ENCODE measurements at regions of chr7 and their contacts with region 1.

Region 1: DNA sequence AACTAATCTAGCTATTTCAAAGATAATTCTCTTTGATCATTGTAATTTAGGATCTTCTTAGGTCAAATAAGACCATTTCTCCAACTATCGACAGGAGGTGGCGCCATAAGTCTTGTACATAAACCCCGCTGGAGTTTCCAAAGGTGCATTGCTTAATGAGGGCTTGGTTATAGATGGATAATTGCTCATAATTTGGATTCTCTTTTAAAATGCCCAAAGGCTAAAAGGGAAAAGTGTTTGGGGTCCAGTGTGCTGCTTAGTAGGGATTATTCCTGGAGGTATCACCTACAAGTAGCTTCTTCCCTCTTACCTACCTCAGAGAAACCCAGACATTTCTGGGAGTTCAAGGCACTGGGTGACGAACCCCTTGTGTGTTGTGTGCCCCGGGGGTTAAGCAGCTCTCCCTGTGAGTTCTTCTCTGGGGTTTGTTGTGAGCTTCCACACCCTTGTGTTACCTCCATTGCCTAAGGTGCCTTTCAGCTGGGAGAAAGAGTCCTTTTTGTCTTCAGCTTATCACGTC is 75.2 kb downstream of the PAXIP1 start:
- H3K4me3 Mint-ChIP-seq: peak overlapping the region; percentile 98
- H3K27ac Mint-ChIP-seq: peak overlapping the region; percentile 98
- H3K4me1 Mint-ChIP-seq: peaks cover 19% of the 10 kb centered on the region
- H3K27me3 Mint-ChIP-seq: peaks cover 4% of the 10 kb centered on the region

Region 2: GRCh38 chr7:154953006-154953684 is 25.5 kb after region 1 on chr7:
- intact Hi-C with region 1: loop called (anchors 1 kb)
- H3K4me3 Mint-ChIP-seq: no peak overlapping the region
- H3K27ac Mint-ChIP-seq: no peak overlapping the region
- H3K4me1 Mint-ChIP-seq: no peaks in the 10 kb centered on the region
- H3K27me3 Mint-ChIP-seq: no peaks in the 10 kb centered on the region

Region 3: GRCh38 chr7:154968336-154969001 is 40.8 kb after region 1 on chr7:
- intact Hi-C with region 1: no loop called
- H3K4me3 Mint-ChIP-seq: no peak overlapping the region
- H3K27ac Mint-ChIP-seq: no peak overlapping the region
- H3K4me1 Mint-ChIP-seq: peaks cover 5% of the 10 kb centered on the region
- H3K27me3 Mint-ChIP-seq: no peaks in the 10 kb centered on the region

Region 4: DNA sequence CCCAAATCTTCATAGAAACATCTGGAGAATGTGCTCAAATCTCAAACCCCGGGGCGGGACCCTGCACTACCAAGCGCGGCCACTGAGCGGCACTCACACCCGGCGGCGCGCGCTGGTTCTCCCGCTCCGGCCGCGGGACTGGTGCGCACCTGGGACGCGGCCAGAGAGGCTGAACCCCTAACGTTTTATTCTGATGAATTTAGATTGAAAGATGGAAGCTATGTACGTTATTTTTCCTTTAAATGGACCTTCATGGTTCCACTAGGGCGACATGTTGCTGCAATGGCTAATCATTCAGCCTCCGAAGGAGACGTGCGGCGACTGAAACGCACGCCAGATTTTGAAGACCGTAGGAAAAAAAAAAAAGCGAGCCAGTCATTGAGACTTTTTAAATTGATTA is 263.0 kb after region 1 on chr7:
- intact Hi-C with region 1: loop called (anchors 10 kb)
- H3K4me3 Mint-ChIP-seq: no peak overlapping the region
- H3K27ac Mint-ChIP-seq: no peak overlapping the region
- H3K4me1 Mint-ChIP-seq: peaks cover 26% of the 10 kb centered on the region
- H3K27me3 Mint-ChIP-seq: peaks cover 3% of the 10 kb centered on the region

Region 5: GRCh38 chr7:155298834-155299534 is 371.3 kb after region 1 on chr7:
- intact Hi-C with region 1: loop called (anchors 5 kb)
- H3K4me3 Mint-ChIP-seq: peak overlapping the region; percentile 96
- H3K27ac Mint-ChIP-seq: peak overlapping the region; percentile 92
- H3K4me1 Mint-ChIP-seq: peaks cover 53% of the 10 kb centered on the region
- H3K27me3 Mint-ChIP-seq: no peaks in the 10 kb centered on the region

Region 6: DNA sequence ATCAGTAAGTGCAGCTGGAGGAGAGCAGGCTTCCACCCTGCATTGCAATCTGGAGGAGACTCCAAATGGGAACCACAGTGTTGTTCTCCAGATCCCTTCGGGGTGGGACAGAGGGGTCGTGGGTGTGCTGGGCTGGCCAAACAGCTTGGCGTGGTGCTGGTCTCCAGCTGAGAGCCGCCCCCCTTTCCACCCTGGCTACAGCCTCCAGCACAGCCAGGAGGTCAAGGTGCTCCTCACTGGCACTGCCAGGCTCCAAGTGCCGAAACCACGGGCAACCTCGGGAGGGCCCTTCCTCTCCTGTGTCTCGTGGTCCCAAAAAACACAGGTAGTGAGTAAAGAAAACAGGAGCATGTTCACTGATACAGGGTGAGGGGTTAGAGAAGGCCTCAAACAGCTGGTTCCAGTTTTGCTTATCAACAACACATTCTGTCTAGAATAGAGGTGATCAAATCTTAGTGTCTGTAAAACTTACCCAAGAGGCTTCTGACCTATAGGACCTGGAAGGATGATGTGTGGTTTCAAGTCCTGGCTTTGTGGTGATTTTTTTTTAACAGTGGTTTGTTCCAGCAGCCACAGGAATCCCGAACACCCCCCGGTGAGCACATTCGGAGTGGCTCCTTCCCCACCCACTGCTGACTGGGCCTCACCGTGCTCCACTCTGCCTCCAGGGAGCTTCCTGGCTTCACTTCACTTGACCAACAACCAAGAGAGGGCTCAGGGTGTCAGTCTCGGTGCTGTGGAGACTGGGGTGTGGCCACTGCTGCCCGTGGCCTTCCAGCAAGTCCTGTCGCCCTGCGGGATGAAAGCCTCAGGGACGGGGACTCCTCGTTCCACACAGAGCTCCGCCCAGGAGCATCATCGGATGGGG is 499.1 kb after region 1 on chr7:
- intact Hi-C with region 1: no loop called
- H3K4me3 Mint-ChIP-seq: no peak overlapping the region
- H3K27ac Mint-ChIP-seq: no peak overlapping the region
- H3K4me1 Mint-ChIP-seq: no peaks in the 10 kb centered on the region
- H3K27me3 Mint-ChIP-seq: peaks cover 39% of the 10 kb centered on the region

Region 7: GRCh38 chr7:155752756-155753445 is 825.2 kb after region 1 on chr7:
- intact Hi-C with region 1: loop called (anchors 10 kb)
- H3K4me3 Mint-ChIP-seq: peak overlapping the region; percentile 45
- H3K27ac Mint-ChIP-seq: peak overlapping the region; percentile 64
- H3K4me1 Mint-ChIP-seq: peaks cover 77% of the 10 kb centered on the region
- H3K27me3 Mint-ChIP-seq: no peaks in the 10 kb centered on the region

Measured in dendritic cell treated with granulocyte-macrophage colony-stimulating factor and Interleukin-4, amounts not matched to agents 40 ng/mL and 50 ng/mL, for 4 days (primary cell).